CD8-positive, alpha-beta T cell (primary cell): ENCODE measurements at regions of chr20 and their contacts with region 1.

Region 1: DNA sequence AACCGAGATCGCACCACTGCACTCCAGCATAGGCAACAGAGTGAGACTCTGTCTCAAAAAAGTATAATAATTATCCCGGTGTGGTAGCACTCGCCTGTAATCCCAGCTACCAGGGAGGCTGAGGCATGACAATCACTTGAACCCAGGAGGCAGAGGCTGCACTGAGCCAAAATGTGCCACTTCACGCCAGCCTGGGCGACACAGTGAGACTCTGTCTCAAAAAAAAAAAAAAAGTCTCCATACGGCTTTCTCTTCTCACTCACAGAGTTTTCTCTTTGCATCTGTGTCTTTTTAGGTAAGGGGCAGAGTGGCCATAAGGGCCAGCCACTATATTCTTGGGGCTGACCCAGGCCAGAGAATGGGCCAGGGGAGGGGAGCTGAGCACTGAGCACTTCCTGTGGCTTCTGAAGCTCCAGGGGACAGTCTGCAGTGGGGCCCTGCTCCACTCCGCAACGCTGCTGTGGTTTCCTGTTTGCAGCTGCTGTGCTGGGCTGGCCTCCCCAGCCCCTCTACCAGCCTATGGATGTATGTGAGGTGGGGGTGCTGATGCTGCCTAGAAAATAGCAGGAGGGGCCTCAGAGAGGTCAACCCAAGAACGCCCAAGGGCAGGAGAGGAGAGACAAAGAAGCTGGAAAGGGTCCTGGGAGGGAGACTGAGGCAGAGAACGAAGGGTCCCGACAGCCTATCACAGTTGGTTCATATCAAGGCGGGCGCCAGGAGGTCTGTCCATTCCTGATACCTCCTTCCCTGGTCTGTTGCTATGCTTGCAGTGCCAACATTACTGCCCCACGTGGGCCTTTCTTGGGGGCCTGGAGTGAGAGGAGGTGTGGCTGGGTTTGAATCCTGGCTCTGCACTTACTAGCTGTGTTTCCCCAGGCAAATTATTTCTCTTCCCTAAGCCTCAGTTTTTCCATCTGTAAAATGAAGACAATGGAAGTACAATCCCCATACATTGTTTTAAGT is 16.0 kb downstream of the SLA2 start:
- DNase-seq: peak; percentile 19 to 81 (median 60)
- ATAC-seq: peak; percentile 69
- H3K4me3 ChIP-seq: peak overlapping the region; percentile 22 to 25
- H3K4me3 Mint-ChIP-seq: peak overlapping the region; percentile 80
- H3K27ac ChIP-seq: peak overlapping the region; percentile 47 to 75
- H3K27ac Mint-ChIP-seq: peak overlapping the region; percentile 97
- H3K4me1 ChIP-seq: peaks cover 44% of the 10 kb centered on the region
- H3K4me1 Mint-ChIP-seq: peaks cover 56% of the 10 kb centered on the region
- H3K27me3 ChIP-seq: no peaks in the 10 kb centered on the region
- H3K27me3 Mint-ChIP-seq: no peaks in the 10 kb centered on the region
- CTCF ChIP-seq: no peak

Region 2: DNA sequence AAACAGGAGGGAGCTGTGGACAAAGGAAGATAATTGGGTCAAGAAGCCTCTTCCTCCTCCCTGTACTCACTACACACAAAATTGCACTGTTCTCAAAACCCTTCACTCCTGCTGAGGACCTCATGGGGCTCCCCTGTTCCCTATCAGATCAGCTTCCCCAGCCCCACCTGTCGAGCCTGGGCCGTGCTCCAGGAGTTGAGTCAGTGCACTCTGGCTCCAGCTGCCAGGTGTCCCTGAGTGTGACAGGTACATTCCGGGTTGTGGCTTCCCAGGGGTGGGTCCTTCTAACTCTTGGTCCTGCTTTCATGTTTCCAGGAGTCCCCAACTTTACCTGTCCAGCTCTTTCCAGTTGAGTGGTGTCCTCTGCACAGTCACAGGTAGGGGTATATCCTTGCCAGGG is 16.0 kb before region 1 on chr20:
- CTCF ChIA-PET with region 1: interaction called, 21 read pairs
- POLR2A ChIA-PET with region 1: interaction called, 5 read pairs
- intact Hi-C with region 1: no loop called
- DNase-seq: no peak
- ATAC-seq: no peak
- H3K4me3 ChIP-seq: no peak overlapping the region
- H3K4me3 Mint-ChIP-seq: no peak overlapping the region
- H3K27ac ChIP-seq: no peak overlapping the region
- H3K27ac Mint-ChIP-seq: peak overlapping the region; percentile 55
- H3K4me1 ChIP-seq: no peaks in the 10 kb centered on the region
- H3K4me1 Mint-ChIP-seq: peaks cover 16% of the 10 kb centered on the region
- H3K27me3 ChIP-seq: no peaks in the 10 kb centered on the region
- H3K27me3 Mint-ChIP-seq: no peaks in the 10 kb centered on the region
- CTCF ChIP-seq: no peak

Region 3: DNA sequence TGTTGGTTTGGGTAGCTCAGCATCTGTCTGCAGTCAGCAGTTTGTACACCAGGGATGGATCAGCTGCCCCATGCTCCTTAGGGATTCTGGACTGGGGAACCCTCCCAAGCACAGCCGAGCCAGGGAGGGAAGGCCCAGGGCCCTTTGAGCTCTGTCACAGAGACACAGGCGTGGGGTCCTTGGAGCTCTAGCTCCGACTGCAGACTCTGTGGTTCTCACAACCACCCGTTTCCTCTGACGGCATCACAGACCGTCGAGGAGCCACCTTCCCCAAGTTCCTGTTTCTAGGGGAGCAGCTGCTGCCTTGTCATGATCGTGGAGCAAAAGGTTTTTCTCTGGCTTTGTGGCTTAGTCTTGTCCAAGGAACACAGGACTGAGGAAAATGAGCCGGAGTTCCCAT is 16.0 kb after region 1 on chr20 and contains the start of gene SLA2:
- CTCF ChIA-PET with region 1: interaction called, 21 read pairs
- POLR2A ChIA-PET with region 1: interaction called, 73 read pairs
- intact Hi-C with region 1: loop called (anchors 2 kb)
- DNase-seq: peak; percentile 49 to 91 (median 76)
- ATAC-seq: peak; percentile 73
- H3K4me3 ChIP-seq: peak within 1 kb of the TSS; percentile 77 to 79
- H3K4me3 Mint-ChIP-seq: peak within 1 kb of the TSS; percentile 98
- H3K27ac ChIP-seq: peak within 1 kb of the TSS; percentile 77 to 84
- H3K27ac Mint-ChIP-seq: peak within 1 kb of the TSS; percentile 98
- H3K4me1 ChIP-seq: peaks cover 41% of the 10 kb centered on the region
- H3K4me1 Mint-ChIP-seq: peaks cover 58% of the 10 kb centered on the region
- H3K27me3 ChIP-seq: no peaks in the 10 kb centered on the region
- H3K27me3 Mint-ChIP-seq: no peaks in the 10 kb centered on the region
- CTCF ChIP-seq: no peak
- total RNA-seq, gene SLA2: 58.5 to 60.3 TPM